ENCODE measurements at regions of chr11 and their contacts with region 1.

Region 1: GRCh38 chr11:72642884-72643511 is 31.2 kb downstream of the PDE2A start:
- DNase-seq: peak; percentile 57
- H3K4me3 ChIP-seq: peak overlapping the region; percentile 53
- H3K27ac ChIP-seq: no peak overlapping the region
- H3K4me1 ChIP-seq: peaks cover 10% of the 10 kb centered on the region
- H3K27me3 ChIP-seq: peaks cover 10% of the 10 kb centered on the region
- CTCF ChIP-seq: peak; percentile 98

Region 2: GRCh38 chr11:71152991-71153390 is 1490.0 kb before region 1 on chr11:
- intact Hi-C with region 1: no loop called
- DNase-seq: peak; percentile 27
- H3K4me3 ChIP-seq: no peak overlapping the region
- H3K27ac ChIP-seq: no peak overlapping the region
- H3K4me1 ChIP-seq: no peaks in the 10 kb centered on the region
- H3K27me3 ChIP-seq: no peaks in the 10 kb centered on the region
- CTCF ChIP-seq: no peak

Region 3: DNA sequence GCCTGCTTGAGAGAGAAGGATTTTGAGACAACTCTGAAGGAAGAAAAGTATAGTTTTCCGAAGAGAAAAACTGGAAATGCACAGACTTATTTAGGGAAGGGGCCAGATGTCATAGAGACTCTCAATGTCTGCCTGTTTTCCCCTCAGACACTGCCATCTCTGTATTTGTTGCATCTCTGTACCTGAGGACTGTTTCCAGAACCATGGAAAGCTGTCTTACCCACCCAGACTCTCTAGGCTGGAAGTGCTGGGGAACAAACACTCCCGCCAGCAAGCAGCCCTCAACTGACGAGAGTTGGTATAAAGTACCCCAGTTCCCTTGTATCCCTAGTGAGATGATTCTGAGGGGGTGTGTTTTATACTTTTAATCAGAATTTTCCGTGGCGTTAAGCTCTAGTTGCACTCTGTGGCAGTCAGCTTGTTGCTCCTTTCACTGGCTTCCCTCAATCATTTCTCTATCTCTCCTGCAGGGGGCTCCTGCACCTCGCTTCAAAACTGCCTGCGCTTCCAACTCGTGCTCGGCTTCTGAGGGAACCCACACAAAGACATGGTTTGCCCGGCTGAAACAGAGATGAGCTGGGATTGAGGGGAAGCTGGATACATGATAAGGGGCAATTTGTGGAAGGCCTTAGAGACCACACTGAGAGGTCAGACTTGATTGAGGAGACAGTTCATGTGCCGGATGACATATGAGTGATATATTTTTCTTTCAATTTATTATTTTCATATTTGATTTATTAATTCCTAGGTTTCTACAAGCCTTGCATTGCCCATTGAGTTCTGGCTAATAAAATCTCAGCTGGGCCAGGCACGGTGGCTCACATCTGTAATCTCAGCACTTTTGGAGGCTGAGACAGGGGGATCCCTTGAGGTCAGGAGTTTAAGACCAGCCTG is 171.7 kb before region 1 on chr11:
- intact Hi-C with region 1: loop called (anchors 5 kb)
- DNase-seq: peak; percentile 57
- H3K4me3 ChIP-seq: no peak overlapping the region
- H3K27ac ChIP-seq: no peak overlapping the region
- H3K4me1 ChIP-seq: no peaks in the 10 kb centered on the region
- H3K27me3 ChIP-seq: no peaks in the 10 kb centered on the region
- CTCF ChIP-seq: peak; percentile 75

Region 4: GRCh38 chr11:72497731-72498130 is 145.3 kb before region 1 on chr11:
- intact Hi-C with region 1: no loop called
- DNase-seq: no peak
- H3K4me3 ChIP-seq: no peak overlapping the region
- H3K27ac ChIP-seq: no peak overlapping the region
- H3K4me1 ChIP-seq: no peaks in the 10 kb centered on the region
- H3K27me3 ChIP-seq: no peaks in the 10 kb centered on the region
- CTCF ChIP-seq: no peak

Region 5: GRCh38 chr11:72585762-72586311 is 57.2 kb before region 1 on chr11:
- intact Hi-C with region 1: loop called (anchors 2 kb)
- DNase-seq: peak; percentile 61
- H3K4me3 ChIP-seq: no peak overlapping the region
- H3K27ac ChIP-seq: no peak overlapping the region
- H3K4me1 ChIP-seq: peaks cover 10% of the 10 kb centered on the region
- H3K27me3 ChIP-seq: peaks cover 25% of the 10 kb centered on the region
- CTCF ChIP-seq: peak; percentile 92

Region 6: GRCh38 chr11:72685560-72686480 is 42.8 kb after region 1 on chr11:
- intact Hi-C with region 1: no loop called
- DNase-seq: peak; percentile 55
- H3K4me3 ChIP-seq: no peak overlapping the region
- H3K27ac ChIP-seq: peak overlapping the region; percentile 33
- H3K4me1 ChIP-seq: no peaks in the 10 kb centered on the region
- H3K27me3 ChIP-seq: no peaks in the 10 kb centered on the region
- CTCF ChIP-seq: no peak

Region 7: DNA sequence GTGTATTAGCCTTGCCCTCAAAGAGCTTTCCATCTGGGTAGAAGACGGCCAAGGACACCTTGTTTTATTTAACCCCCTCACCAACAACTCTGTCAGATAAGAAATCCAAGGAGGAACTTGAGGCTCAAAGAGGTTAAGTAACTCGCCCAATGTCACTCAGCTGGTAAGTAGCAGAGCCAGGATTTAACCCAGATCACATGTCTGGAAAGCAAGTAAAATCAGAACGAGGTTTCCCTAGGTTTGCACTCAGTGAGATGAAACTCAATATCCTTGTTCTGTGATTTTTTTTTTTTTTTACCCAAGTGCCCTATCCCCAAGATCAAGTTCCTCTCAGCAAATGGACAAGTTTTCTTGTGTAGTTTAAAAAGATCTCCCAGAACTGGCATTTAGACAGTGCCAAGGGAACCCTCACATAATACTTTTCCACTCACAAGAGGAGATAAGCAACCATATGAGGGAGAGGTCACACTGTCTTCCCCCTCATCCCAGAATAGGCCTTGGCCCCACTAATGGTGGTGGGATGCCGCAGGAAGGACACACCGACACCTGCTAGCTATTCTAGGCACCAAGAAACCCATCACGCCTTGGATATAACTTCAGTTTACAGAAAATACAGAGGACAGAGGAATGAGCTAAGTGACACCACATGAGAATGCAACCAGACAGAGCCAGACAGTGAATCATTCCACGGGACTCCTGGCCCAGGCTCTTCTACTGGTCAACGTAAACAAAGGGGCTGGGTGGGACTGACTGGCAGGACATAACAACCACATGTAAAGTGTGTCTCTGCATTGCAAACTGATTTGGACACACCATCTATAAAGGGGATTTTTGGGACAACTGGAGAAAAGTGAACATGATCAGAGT is 117.8 kb after region 1 on chr11:
- intact Hi-C with region 1: no loop called
- DNase-seq: no peak
- H3K4me3 ChIP-seq: no peak overlapping the region
- H3K27ac ChIP-seq: no peak overlapping the region
- H3K4me1 ChIP-seq: peaks cover 3% of the 10 kb centered on the region
- H3K27me3 ChIP-seq: no peaks in the 10 kb centered on the region
- CTCF ChIP-seq: no peak

Measured in colonic mucosa (tissue), 4 donors.